ENCODE measurements at regions of chr5 and their contacts with region 1.

Region 1: DNA sequence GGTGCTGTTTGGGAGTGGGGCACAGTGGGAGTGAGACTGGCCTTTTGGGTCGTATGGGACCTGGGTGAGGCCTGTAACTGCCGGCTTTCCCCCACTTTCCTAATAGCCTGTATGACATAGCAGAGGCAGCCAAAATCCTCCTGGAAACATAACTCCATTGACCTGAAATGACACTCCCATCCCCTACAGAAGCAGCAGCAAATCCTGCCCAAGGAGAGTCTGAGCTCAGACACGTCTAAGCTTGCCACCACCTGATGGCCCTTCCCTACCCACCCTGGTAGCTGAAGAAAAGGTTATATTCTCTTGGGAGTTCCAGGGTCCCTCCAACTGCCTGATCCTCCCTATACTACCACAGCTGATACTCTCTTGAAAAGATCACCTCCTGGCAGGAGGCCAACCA is 179.8 kb upstream of the ARRDC3 start:
- DNase-seq: no peak

Region 2: GRCh38 chr5:91816681-91817080 is 253.8 kb after region 1 on chr5:
- intact Hi-C with region 1: loop called in 1 of 2 experiments (anchors 5 kb)
- DNase-seq: no peak

Measured in posterior vena cava (tissue), 2 donors.